ENCODE measurements at regions of chr1 and their contacts with region 1.

Region 1: DNA sequence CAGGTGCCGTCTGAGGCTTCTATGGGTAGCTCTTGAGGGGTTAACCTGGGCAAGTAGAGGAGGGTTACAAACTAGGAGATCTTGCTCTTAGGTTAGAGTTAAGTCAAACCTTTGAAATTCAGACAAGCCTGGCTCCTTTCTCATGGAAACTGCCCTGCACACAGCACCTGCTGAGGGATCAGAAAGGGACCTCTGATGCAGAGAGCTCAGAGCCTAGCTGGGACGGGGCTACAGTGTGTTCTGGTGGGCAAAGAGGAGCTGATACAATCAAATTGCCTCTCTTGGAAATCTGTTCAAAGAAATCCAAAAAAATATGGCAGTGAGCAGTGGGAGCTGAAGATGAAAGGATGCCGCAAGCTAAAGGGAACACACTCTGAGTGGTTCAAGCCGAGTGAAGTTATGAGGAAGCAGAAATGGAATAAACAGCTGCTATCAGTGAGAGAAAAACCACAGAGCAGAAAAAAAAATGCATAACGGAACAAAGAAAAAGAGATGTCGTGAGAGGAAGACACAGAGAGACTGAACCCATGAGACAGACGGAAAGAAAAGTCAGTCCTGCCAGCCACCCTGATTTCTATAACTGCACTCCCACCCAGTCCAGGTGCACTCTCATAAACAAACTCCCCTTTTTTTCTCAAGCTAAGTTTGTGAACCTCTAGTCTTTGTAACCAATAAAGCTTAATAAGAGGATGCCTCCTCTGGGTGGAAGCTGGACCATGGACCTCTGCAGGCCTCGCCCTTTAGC is 26.6 kb downstream of the PAFAH2 start:
- DNase-seq: peak; percentile 5
- H3K4me3 Mint-ChIP-seq: peak overlapping the region; percentile 31
- H3K27ac Mint-ChIP-seq: peak overlapping the region; percentile 69
- H3K4me1 Mint-ChIP-seq: peaks cover 32% of the 10 kb centered on the region
- H3K27me3 Mint-ChIP-seq: no peaks in the 10 kb centered on the region

Region 2: GRCh38 chr1:25343872-25344271 is 627.4 kb before region 1 on chr1:
- intact Hi-C with region 1: no loop called
- DNase-seq: no peak
- H3K4me3 Mint-ChIP-seq: no peak overlapping the region
- H3K27ac Mint-ChIP-seq: peak overlapping the region; percentile 55
- H3K4me1 Mint-ChIP-seq: peaks cover 33% of the 10 kb centered on the region
- H3K27me3 Mint-ChIP-seq: no peaks in the 10 kb centered on the region

Region 3: GRCh38 chr1:25922056-25922969 is 48.9 kb before region 1 on chr1:
- intact Hi-C with region 1: loop called (anchors 5 kb)
- DNase-seq: peak; percentile 38
- H3K4me3 Mint-ChIP-seq: peak overlapping the region; percentile 75
- H3K27ac Mint-ChIP-seq: peak overlapping the region; percentile 23
- H3K4me1 Mint-ChIP-seq: peaks cover 29% of the 10 kb centered on the region
- H3K27me3 Mint-ChIP-seq: peaks cover 41% of the 10 kb centered on the region

Region 4: DNA sequence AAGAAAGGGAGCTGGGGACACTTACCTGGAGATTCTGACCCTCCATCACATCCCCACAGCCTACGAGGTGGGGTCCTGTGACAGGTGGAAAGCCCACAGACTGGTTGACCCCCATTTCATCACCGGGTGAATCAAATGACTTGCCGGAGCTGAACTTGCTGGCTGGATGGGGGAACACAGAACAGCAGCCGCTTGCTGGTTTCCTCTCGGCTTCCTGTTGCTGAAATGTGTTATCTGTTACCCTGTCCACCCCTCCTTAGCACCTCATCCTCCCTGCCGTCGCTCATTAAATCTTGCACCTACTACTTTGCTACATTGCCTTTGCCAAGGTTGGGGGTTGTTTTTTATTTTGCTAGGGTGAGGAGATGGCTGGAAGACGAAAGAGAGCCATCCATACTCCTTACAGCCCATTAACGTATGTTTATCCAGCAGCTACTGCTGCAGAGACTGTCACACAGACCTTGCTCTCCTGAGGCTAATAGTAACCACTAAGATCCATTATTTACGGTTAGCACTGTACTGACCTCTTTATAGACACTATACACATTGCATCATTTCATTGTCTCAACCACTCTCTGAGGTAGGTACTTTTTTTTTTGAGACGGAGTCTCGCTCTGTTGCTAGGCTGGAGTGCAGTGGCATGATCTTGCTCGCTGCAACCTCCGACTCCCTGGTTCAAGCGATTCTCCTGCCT is 19.6 kb after region 1 on chr1:
- intact Hi-C with region 1: no loop called
- DNase-seq: peak; percentile 26
- H3K4me3 Mint-ChIP-seq: peak overlapping the region; percentile 78
- H3K27ac Mint-ChIP-seq: peak overlapping the region; percentile 80
- H3K4me1 Mint-ChIP-seq: peaks cover 39% of the 10 kb centered on the region
- H3K27me3 Mint-ChIP-seq: no peaks in the 10 kb centered on the region